A549 (cell line): ENCODE measurements at regions of chr17 and their contacts with region 1.

Region 1: GRCh38 chr17:75632863-75633485 is at the start of gene SMIM5:
- DNase-seq: peak; percentile 87 to 99
- ATAC-seq: peak; percentile 56 to 91
- H3K4me3 ChIP-seq: no peak within 1 kb of the TSS
- H3K27ac ChIP-seq: peak within 1 kb of the TSS; percentile 56 to 86
- H3K4me1 ChIP-seq: peaks cover 19% of the 10 kb centered on the region
- CTCF ChIP-seq: peak; percentile 98
- EP300 ChIP-seq: no peak
- POLR2A ChIP-seq: no peak
- RAD21 ChIP-seq: peak; percentile 83 to 85
- polyA plus RNA-seq, gene SMIM5: 0.25 and 0.30 TPM in 2 replicates

Region 2: GRCh38 chr17:75447951-75448856 is 184.8 kb before region 1 on chr17:
- CTCF ChIA-PET with region 1: no interaction called
- POLR2A ChIA-PET with region 1: no interaction called
- DNase-seq: no peak
- ATAC-seq: no peak
- H3K4me3 ChIP-seq: no peak overlapping the region
- H3K27ac ChIP-seq: no peak overlapping the region
- H3K4me1 ChIP-seq: no peaks in the 10 kb centered on the region
- CTCF ChIP-seq: no peak
- EP300 ChIP-seq: no peak
- POLR2A ChIP-seq: no peak
- RAD21 ChIP-seq: no peak

Region 3: GRCh38 chr17:75481194-75482068 is 151.5 kb before region 1 on chr17:
- CTCF ChIA-PET with region 1: interaction called, 10 read pairs
- POLR2A ChIA-PET with region 1: no interaction called
- DNase-seq: no peak
- ATAC-seq: peak in 1 of 2 experiments; percentile 24; a peak in 3 of 6 replicates
- H3K4me3 ChIP-seq: no peak overlapping the region
- H3K27ac ChIP-seq: peak overlapping the region in 1 of 2 experiments; percentile 9; a peak in 1 of 6 replicates
- H3K4me1 ChIP-seq: no peaks in the 10 kb centered on the region
- CTCF ChIP-seq: no peak
- EP300 ChIP-seq: no peak
- POLR2A ChIP-seq: no peak
- RAD21 ChIP-seq: no peak

Region 4: GRCh38 chr17:75515496-75516254 is 117.3 kb before region 1 on chr17 and contains the start of gene CASKIN2:
- CTCF ChIA-PET with region 1: interaction called, 42 read pairs
- POLR2A ChIA-PET with region 1: no interaction called
- DNase-seq: peak; percentile 94 to 99
- ATAC-seq: peak; percentile 69 to 85
- H3K4me3 ChIP-seq: peak within 1 kb of the TSS; percentile 89
- H3K27ac ChIP-seq: peak within 1 kb of the TSS; percentile 91 to 98
- H3K4me1 ChIP-seq: peaks cover 38% of the 10 kb centered on the region
- CTCF ChIP-seq: peak; percentile 100
- EP300 ChIP-seq: no peak
- POLR2A ChIP-seq: no peak; the same call in 1 of the 2 replicates
- RAD21 ChIP-seq: peak; percentile 81 to 95
- polyA plus RNA-seq, gene CASKIN2: 3.6 and 4.6 TPM in 2 replicates

Region 5: DNA sequence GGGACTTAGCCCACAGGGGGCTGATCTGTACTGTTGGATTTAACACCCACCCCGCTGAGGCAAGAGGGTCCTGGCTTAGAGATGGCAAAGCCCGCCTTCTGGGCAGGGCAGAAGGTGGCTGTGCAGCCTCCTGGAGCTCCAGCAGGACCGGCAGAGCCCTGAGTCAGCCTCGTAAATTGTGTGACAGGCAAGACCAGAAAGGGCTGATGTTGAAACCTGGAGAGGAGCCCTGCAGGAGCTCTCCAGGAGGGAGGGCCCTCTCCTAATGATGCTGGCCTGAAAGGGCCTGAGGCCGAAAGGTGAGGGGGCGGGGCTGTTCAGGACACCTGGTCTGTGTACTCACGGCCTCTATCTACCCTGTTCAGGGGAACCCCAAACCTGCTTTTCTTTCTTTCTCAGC is 67.9 kb before region 1 on chr17:
- CTCF ChIA-PET with region 1: interaction called, 21 read pairs
- POLR2A ChIA-PET with region 1: no interaction called
- DNase-seq: peak; percentile 59 to 70
- ATAC-seq: peak; percentile 81 to 84
- H3K4me3 ChIP-seq: no peak overlapping the region
- H3K27ac ChIP-seq: peak overlapping the region; percentile 47 to 69; a peak in 4 of 6 replicates
- H3K4me1 ChIP-seq: peaks cover 30% of the 10 kb centered on the region
- CTCF ChIP-seq: no peak
- EP300 ChIP-seq: no peak
- POLR2A ChIP-seq: no peak
- RAD21 ChIP-seq: no peak

Region 6: GRCh38 chr17:75673487-75673886 is 40.5 kb after region 1 on chr17:
- CTCF ChIA-PET with region 1: interaction called, 2,254 read pairs
- POLR2A ChIA-PET with region 1: no interaction called
- DNase-seq: no peak
- ATAC-seq: peak in 1 of 2 experiments; percentile 47; a peak in 3 of 6 replicates
- H3K4me3 ChIP-seq: no peak overlapping the region
- H3K27ac ChIP-seq: no peak overlapping the region
- H3K4me1 ChIP-seq: peaks cover 23% of the 10 kb centered on the region
- CTCF ChIP-seq: no peak
- EP300 ChIP-seq: no peak
- POLR2A ChIP-seq: no peak
- RAD21 ChIP-seq: no peak

Region 7: GRCh38 chr17:75720725-75721462 is 87.9 kb after region 1 on chr17 and contains the start of gene ITGB4:
- CTCF ChIA-PET with region 1: interaction called, 1,931 read pairs
- POLR2A ChIA-PET with region 1: no interaction called
- DNase-seq: peak; percentile 42 to 75
- ATAC-seq: peak; percentile 68 to 70
- H3K4me3 ChIP-seq: peak within 1 kb of the TSS; percentile 57
- H3K27ac ChIP-seq: peak within 1 kb of the TSS; percentile 93 to 94
- H3K4me1 ChIP-seq: peaks cover 35% of the 10 kb centered on the region
- CTCF ChIP-seq: peak; percentile 29; the same call in 1 of the 3 replicates
- EP300 ChIP-seq: no peak
- POLR2A ChIP-seq: no peak
- RAD21 ChIP-seq: peak in 1 of 2 experiments; percentile 27; a peak in 2 of 5 replicates
- polyA plus RNA-seq, gene ITGB4: 19.8 and 20.6 TPM in 2 replicates

Region 8: DNA sequence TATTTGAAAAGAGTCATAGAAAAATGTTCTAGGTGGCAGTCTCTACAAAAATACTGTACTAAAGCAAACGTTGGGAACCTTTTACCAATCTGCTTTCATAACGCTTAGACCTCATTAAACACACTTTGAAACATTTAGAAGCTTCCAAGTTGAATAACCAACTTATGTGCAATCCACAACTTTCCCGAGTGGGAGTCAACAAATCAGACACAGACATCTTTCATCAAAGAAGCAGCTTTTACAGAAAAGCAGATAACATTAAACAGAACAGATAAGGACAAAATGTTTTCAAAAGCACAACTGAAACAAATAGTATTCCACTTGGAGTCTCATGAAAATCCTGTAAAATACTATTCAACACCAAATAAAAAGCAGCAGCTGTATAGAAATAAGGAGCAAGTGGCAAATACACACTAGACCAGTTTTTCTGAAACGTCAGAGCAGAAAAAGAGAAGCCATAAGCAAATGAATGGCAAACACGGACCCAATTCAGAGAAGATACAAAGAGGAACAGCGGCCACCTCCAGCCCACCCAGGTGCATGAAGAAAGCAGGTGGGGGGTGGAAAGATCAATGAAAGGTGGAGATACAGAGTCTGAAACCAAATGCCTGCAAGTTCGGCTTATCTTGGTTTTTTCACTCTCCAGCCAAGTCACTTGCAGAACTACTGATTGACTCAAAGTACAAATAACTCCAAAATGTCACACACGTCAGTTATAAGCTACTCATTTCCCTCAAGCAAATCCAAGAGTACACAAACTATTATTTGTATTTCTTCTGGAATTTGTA is 326.3 kb after region 1 on chr17:
- CTCF ChIA-PET with region 1: no interaction called
- POLR2A ChIA-PET with region 1: no interaction called
- DNase-seq: no peak
- ATAC-seq: no peak; a peak in 1 of 6 replicates
- H3K4me3 ChIP-seq: no peak overlapping the region
- H3K27ac ChIP-seq: no peak overlapping the region
- H3K4me1 ChIP-seq: peaks cover 17% of the 10 kb centered on the region; the same call in 2 of the 3 replicates
- CTCF ChIP-seq: no peak
- EP300 ChIP-seq: no peak
- POLR2A ChIP-seq: no peak
- RAD21 ChIP-seq: no peak